Naive thymus-derived CD4-positive, alpha-beta T cell (primary cell): ENCODE measurements at regions of chr1 and their contacts with region 1.

Region 1: GRCh38 chr1:226679853-226680516 is 59.1 kb downstream of the ITPKB start:
- DNase-seq: peak; percentile 42 to 89 (median 75)
- ATAC-seq: peak; percentile 58
- H3K4me3 ChIP-seq: peak overlapping the region; percentile 40
- H3K4me3 Mint-ChIP-seq: peak overlapping the region; percentile 80 to 90 (median 82)
- H3K27ac ChIP-seq: peak overlapping the region; percentile 86
- H3K27ac Mint-ChIP-seq: peak overlapping the region; percentile 95 to 100 (median 99)
- H3K4me1 ChIP-seq: peaks cover 86 to 97% of the 10 kb centered on the region in 2 donors
- H3K4me1 Mint-ChIP-seq: peaks cover 83 to 100% (median 99%) of the 10 kb centered on the region in 7 donors
- H3K27me3 ChIP-seq: no peaks in the 10 kb centered on the region
- H3K27me3 Mint-ChIP-seq: peaks cover 0 to under 1% (median 0%) of the 10 kb centered on the region in 5 donors

Region 2: DNA sequence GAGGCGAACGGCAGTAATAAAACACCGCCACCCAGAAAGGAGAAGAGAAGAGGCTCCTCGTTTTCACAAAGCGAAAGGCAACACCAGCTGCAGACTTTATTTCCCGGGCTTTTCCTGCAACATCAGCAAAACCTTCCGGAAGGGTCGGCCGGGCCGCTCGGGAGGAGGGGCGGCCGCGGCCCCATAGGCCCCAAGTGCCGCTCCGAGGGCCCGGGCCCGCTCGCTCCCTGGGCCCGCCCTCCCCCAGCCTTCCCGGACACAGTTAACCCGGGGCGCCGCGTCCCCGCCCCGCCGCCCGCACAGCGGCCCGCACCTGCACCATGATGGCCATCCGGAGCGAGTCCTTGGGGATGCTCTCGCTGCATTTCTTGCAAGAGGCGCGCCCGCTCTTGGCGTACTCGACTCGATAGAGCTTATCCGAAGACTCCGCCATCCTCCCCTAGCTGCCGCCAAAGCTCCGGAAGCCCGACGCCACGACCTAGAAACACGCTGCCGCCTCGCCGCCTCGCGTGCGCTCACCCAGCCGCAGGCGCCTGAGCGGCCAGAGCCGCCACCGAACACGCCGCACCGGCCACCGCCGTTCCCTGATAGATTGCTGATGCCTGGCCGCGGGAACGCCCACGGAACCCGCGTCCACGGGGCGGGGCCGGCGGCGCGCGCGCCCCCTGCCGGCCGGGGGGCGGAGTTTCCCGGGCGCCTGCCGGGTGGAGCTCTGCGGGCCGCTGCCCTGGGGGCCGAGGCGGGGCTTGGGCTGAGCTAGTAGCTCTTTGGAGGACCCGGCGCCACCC is 272.3 kb before region 1 on chr1 and contains the start of gene PARP1:
- CTCF ChIA-PET with region 1: no interaction called
- POLR2A ChIA-PET with region 1: no interaction called
- intact Hi-C with region 1: loop called (anchors 5 kb)
- DNase-seq: peak; percentile 83 to 93 (median 89)
- ATAC-seq: peak; percentile 94
- H3K4me3 ChIP-seq: peak within 1 kb of the TSS; percentile 82
- H3K4me3 Mint-ChIP-seq: peak within 1 kb of the TSS; percentile 89 to 99 (median 94)
- H3K27ac ChIP-seq: peak within 1 kb of the TSS; percentile 74
- H3K27ac Mint-ChIP-seq: peak within 1 kb of the TSS; percentile 68 to 96 (median 93)
- H3K4me1 ChIP-seq: peaks cover 23 to 30% of the 10 kb centered on the region in 2 donors
- H3K4me1 Mint-ChIP-seq: peaks cover 37 to 46% (median 40%) of the 10 kb centered on the region in 7 donors
- H3K27me3 ChIP-seq: no peaks in the 10 kb centered on the region
- H3K27me3 Mint-ChIP-seq: peaks cover 0 to 3% (median 0%) of the 10 kb centered on the region in 5 donors
- total RNA-seq, gene PARP1: 63.6 to 165 (median 89.3) TPM

Region 3: GRCh38 chr1:226532553-226532952 is 147.4 kb before region 1 on chr1:
- CTCF ChIA-PET with region 1: no interaction called
- POLR2A ChIA-PET with region 1: no interaction called
- intact Hi-C with region 1: no loop called
- DNase-seq: no peak
- ATAC-seq: no peak
- H3K4me3 ChIP-seq: no peak overlapping the region
- H3K4me3 Mint-ChIP-seq: no peak overlapping the region
- H3K27ac ChIP-seq: no peak overlapping the region
- H3K27ac Mint-ChIP-seq: no peak overlapping the region
- H3K4me1 ChIP-seq: no peaks in the 10 kb centered on the region
- H3K4me1 Mint-ChIP-seq: no peaks in the 10 kb centered on the region
- H3K27me3 ChIP-seq: no peaks in the 10 kb centered on the region
- H3K27me3 Mint-ChIP-seq: peaks cover 4 to 21% (median 8%) of the 10 kb centered on the region in 5 donors

Region 4: GRCh38 chr1:226642876-226643576 is 37.0 kb before region 1 on chr1:
- CTCF ChIA-PET with region 1: interaction called, 4 read pairs
- POLR2A ChIA-PET with region 1: interaction called, 6 read pairs
- intact Hi-C with region 1: loop called in 1 of 2 experiments (anchors 1 kb)
- DNase-seq: peak in 2 of 9 donors; percentile 62 to 73
- ATAC-seq: peak; percentile 70
- H3K4me3 ChIP-seq: peak overlapping the region; percentile 24
- H3K4me3 Mint-ChIP-seq: peak overlapping the region; percentile 3 to 87 (median 72)
- H3K27ac ChIP-seq: peak overlapping the region; percentile 69
- H3K27ac Mint-ChIP-seq: peak overlapping the region; percentile 87 to 97 (median 94)
- H3K4me1 ChIP-seq: peaks cover 38 to 53% of the 10 kb centered on the region in 2 donors
- H3K4me1 Mint-ChIP-seq: peaks cover 11 to 85% (median 50%) of the 10 kb centered on the region in 7 donors
- H3K27me3 ChIP-seq: no peaks in the 10 kb centered on the region
- H3K27me3 Mint-ChIP-seq: no peaks in the 10 kb centered on the region

Region 5: DNA sequence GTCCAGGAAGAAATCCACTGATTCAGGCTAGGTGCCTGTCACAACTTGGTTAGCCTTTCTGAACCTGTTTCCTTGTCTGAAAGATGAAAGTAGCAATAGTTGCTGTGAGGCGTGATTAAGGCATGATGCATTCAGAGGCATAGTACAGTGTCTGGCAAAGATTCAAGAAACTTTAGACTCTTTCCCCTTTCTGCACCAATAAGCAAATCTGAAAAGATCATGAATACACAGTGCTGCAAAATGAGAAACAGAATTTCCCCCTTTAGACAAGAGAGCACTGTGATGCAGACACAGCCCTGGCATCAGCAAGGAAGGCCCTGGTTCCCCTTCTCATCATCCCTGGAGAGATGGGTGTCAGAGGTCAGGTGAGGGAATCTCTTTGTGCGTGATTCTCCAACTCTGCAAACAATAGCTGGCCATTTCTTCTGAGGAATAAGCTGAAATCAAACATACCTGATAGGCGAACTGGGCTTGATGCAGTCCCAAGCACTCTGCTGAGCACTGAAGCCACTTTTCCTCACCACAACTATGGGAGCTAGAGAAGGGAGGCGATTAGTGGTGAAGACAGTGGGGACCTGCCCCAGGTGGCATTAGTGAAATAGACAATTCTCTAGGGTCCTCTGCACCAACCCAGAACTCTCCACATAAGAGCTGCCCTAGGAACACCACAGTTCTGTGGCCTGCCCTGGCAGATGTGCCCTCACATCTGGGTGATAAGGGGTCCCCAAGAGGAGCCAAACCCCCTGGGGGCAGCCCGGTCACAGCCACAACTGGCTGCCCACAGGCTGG is 17.4 kb after region 1 on chr1:
- CTCF ChIA-PET with region 1: interaction called, 3 read pairs
- POLR2A ChIA-PET with region 1: interaction called, 24 read pairs
- intact Hi-C with region 1: no loop called
- DNase-seq: peak in 6 of 9 donors; percentile 47 to 76 (median 56)
- ATAC-seq: peak; percentile 81
- H3K4me3 ChIP-seq: no peak overlapping the region
- H3K4me3 Mint-ChIP-seq: peak overlapping the region in 9 of 10 donors; percentile 36 to 89 (median 70)
- H3K27ac ChIP-seq: peak overlapping the region; percentile 86
- H3K27ac Mint-ChIP-seq: peak overlapping the region; percentile 38 to 100 (median 98)
- H3K4me1 ChIP-seq: peaks cover 39 to 82% of the 10 kb centered on the region in 2 donors
- H3K4me1 Mint-ChIP-seq: peaks cover 68 to 100% (median 91%) of the 10 kb centered on the region in 7 donors
- H3K27me3 ChIP-seq: no peaks in the 10 kb centered on the region
- H3K27me3 Mint-ChIP-seq: no peaks in the 10 kb centered on the region

Region 6: GRCh38 chr1:226731257-226731893 is 51.4 kb after region 1 on chr1:
- CTCF ChIA-PET with region 1: interaction called, 3 read pairs
- POLR2A ChIA-PET with region 1: interaction called, 13 read pairs
- intact Hi-C with region 1: no loop called
- DNase-seq: peak in 1 of 9 donors; percentile 20
- ATAC-seq: no peak
- H3K4me3 ChIP-seq: peak overlapping the region; percentile 99
- H3K4me3 Mint-ChIP-seq: peak overlapping the region; percentile 86 to 99 (median 92)
- H3K27ac ChIP-seq: peak overlapping the region; percentile 92
- H3K27ac Mint-ChIP-seq: peak overlapping the region; percentile 88 to 97 (median 94)
- H3K4me1 ChIP-seq: peaks cover 39 to 61% of the 10 kb centered on the region in 2 donors
- H3K4me1 Mint-ChIP-seq: peaks cover 54 to 94% (median 67%) of the 10 kb centered on the region in 7 donors
- H3K27me3 ChIP-seq: no peaks in the 10 kb centered on the region
- H3K27me3 Mint-ChIP-seq: no peaks in the 10 kb centered on the region

Region 7: GRCh38 chr1:226870401-226871279 is 190.7 kb after region 1 on chr1 and contains the start of gene PSEN2:
- CTCF ChIA-PET with region 1: no interaction called
- POLR2A ChIA-PET with region 1: no interaction called
- intact Hi-C with region 1: loop called in 1 of 2 experiments (anchors 1 kb)
- DNase-seq: peak in 6 of 9 donors; percentile 17 to 77 (median 34)
- ATAC-seq: peak; percentile 87
- H3K4me3 ChIP-seq: peak within 1 kb of the TSS; percentile 57
- H3K4me3 Mint-ChIP-seq: peak within 1 kb of the TSS; percentile 73 to 88 (median 84)
- H3K27ac ChIP-seq: no peak within 1 kb of the TSS
- H3K27ac Mint-ChIP-seq: peak within 1 kb of the TSS in 2 of 9 donors; percentile 10 to 48
- H3K4me1 ChIP-seq: peaks cover 0 to 3% of the 10 kb centered on the region in 2 donors
- H3K4me1 Mint-ChIP-seq: peaks cover 3 to 21% (median 11%) of the 10 kb centered on the region in 7 donors
- H3K27me3 ChIP-seq: no peaks in the 10 kb centered on the region
- H3K27me3 Mint-ChIP-seq: peaks cover 7 to 27% (median 10%) of the 10 kb centered on the region in 5 donors
- total RNA-seq, gene PSEN2: 0.70 to 10.3 (median 3.7) TPM